CD8-positive, alpha-beta T cell (primary cell): ENCODE measurements at regions of chr3 and their contacts with region 1.

Region 1: DNA sequence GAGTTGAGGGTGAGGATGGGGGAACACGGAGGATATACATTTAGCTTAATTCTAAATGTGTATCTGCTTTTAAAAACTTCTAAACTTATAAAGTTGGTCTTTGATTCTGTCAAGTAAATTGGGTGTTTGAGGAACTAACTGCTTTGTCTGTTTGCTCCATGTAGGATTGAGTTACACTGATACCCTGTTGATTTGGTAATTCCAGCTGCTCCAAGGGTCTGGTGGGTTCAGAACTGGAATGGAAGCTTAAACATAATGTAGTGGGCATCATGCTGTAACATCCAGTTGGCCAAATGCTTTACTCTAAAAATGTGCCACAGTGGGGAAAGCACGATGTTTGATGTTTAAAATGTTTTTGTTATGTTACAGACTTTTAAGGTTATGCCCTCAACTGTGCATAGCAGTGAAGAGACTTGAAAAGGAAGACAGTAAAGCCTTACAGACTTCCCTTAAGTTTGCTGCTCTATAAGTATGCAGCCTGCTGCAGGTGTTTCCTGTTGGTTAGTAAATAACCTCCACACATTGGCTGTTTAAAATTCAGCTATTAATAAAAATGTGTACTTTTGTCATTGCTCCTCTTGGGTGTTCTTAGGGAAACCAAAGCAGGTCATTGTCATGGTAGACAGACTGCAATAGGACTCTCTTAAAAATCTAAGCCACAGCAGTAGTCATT is 5.9 kb upstream of the EDEM1 start:
- DNase-seq: peak in 1 of 9 experiments; percentile 19
- ATAC-seq: peak; percentile 39
- H3K4me3 ChIP-seq: no peak overlapping the region
- H3K4me3 Mint-ChIP-seq: no peak overlapping the region
- H3K27ac ChIP-seq: no peak overlapping the region
- H3K27ac Mint-ChIP-seq: peak overlapping the region; percentile 55
- H3K4me1 ChIP-seq: peaks cover 4% of the 10 kb centered on the region
- H3K4me1 Mint-ChIP-seq: peaks cover 17% of the 10 kb centered on the region
- H3K27me3 ChIP-seq: no peaks in the 10 kb centered on the region
- H3K27me3 Mint-ChIP-seq: no peaks in the 10 kb centered on the region
- CTCF ChIP-seq: no peak

Region 2: DNA sequence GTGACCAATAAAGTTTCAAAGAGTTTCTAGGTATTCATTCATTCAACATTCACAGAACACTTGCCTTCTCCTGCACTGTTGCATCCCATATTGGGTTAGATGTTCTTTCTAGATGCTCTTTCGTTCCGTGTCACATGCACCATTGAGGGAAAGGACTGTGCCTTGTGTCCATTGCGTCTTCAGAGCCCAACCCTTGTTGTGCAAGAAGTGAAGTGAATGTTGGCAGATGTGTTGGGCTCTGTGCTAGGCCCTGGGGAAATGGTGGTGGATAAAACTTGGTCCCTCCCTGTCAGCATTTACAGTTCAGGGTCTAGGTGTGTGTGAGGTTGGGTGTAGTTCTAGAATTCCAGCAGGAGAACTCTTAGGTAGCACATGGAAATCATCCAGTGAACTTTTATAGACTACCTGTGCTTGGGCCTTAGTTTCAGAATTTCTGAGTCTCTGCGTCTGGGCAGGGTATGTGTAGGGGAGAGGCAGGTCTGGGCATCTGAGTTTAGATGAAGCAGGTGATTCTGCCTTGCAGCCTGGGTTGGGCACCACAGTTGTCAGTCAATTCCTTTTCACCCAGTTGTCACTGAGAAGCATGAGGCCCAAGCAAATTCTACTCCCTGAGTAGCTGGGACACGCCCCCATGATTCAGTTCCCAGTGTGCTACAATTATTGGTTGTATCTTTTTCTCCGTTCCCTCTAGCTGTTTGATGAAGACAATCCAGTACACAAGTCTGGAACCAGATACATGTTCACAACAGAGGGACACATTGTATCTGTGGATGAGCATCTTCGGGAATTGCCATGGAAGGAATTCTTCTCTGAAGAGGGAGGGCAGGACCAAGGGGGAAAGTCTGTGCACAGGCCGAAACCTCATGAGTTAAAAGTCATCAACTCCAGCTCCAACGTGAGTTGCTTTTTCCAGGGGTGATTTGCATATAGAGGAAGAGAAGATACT is 31.3 kb after region 1 on chr3:
- CTCF ChIA-PET with region 1: no interaction called
- POLR2A ChIA-PET with region 1: no interaction called
- intact Hi-C with region 1: loop called in 1 of 2 experiments (anchors 5 kb)
- DNase-seq: no peak
- ATAC-seq: no peak
- H3K4me3 ChIP-seq: no peak overlapping the region
- H3K4me3 Mint-ChIP-seq: no peak overlapping the region
- H3K27ac ChIP-seq: no peak overlapping the region
- H3K27ac Mint-ChIP-seq: peak overlapping the region; percentile 16
- H3K4me1 ChIP-seq: no peaks in the 10 kb centered on the region
- H3K4me1 Mint-ChIP-seq: peaks cover 7% of the 10 kb centered on the region
- H3K27me3 ChIP-seq: no peaks in the 10 kb centered on the region
- H3K27me3 Mint-ChIP-seq: no peaks in the 10 kb centered on the region
- CTCF ChIP-seq: no peak